ENCODE measurements at regions of chr16 and their contacts with region 1.

Region 1: GRCh38 chr16:87471278-87472141 is 21.3 kb downstream of the ZCCHC14 start:
- DNase-seq: no peak
- ATAC-seq: no peak
- H3K4me3 Mint-ChIP-seq: no peak overlapping the region
- H3K27ac Mint-ChIP-seq: no peak overlapping the region
- H3K4me1 Mint-ChIP-seq: no peaks in the 10 kb centered on the region
- H3K27me3 Mint-ChIP-seq: peaks cover 33% of the 10 kb centered on the region
- CTCF ChIP-seq: no peak

Region 2: GRCh38 chr16:88589441-88589840 is 1117.9 kb after region 1 on chr16:
- CTCF ChIA-PET with region 1: no interaction called
- POLR2A ChIA-PET with region 1: interaction called, 13 read pairs
- intact Hi-C with region 1: no loop called
- DNase-seq: no peak
- ATAC-seq: no peak
- H3K4me3 Mint-ChIP-seq: no peak overlapping the region
- H3K27ac Mint-ChIP-seq: peak overlapping the region; percentile 38
- H3K4me1 Mint-ChIP-seq: peaks cover 15% of the 10 kb centered on the region
- H3K27me3 Mint-ChIP-seq: no peaks in the 10 kb centered on the region
- CTCF ChIP-seq: no peak